Mammary epithelial cell (primary cell): ENCODE measurements at regions of chr16 and their contacts with region 1.

Region 1: GRCh38 chr16:23149349-23149996 is at the start of gene USP31:
- DNase-seq: peak; percentile 98
- H3K4me3 ChIP-seq: peak within 1 kb of the TSS; percentile 66 to 90 (median 73)
- H3K27ac ChIP-seq: peak within 1 kb of the TSS; percentile 99
- H3K4me1 ChIP-seq: peaks cover 36% of the 10 kb centered on the region
- H3K27me3 ChIP-seq: no peaks in the 10 kb centered on the region
- CTCF ChIP-seq: no peak
- total RNA-seq, gene USP31: 30.5 to 36.2 TPM

Region 2: GRCh38 chr16:23072084-23072599 is 77.3 kb before region 1 on chr16:
- CTCF ChIA-PET with region 1: no interaction called
- dilution Hi-C with region 1: no loop called
- in situ Hi-C with region 1: no loop called
- intact Hi-C with region 1: loop called (anchors 1 kb)
- DNase-seq: peak; percentile 82
- H3K4me3 ChIP-seq: no peak overlapping the region
- H3K27ac ChIP-seq: peak overlapping the region; percentile 93
- H3K4me1 ChIP-seq: peaks cover 36% of the 10 kb centered on the region
- H3K27me3 ChIP-seq: no peaks in the 10 kb centered on the region
- CTCF ChIP-seq: no peak

Region 3: DNA sequence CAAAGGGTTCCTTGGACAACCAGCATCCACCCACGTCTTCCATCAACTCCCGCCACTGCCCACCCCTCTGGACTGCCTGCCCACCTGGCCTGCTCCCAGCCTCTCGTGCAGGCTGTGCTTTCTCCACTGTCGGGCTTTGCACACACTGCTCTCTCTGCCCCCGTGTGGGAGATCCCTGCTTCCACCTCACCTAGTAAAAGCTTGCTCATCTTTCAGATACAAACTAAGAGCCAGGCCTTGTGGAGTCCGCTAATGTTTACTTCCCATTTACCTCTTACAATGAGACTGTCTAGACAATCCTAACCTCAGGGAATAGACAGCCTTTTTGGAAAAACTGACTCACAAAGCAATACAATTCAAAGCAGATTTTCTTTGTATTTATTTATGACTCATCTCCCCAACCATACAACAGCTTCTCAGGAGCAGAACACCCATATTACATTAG is 67.8 kb before region 1 on chr16:
- CTCF ChIA-PET with region 1: no interaction called
- dilution Hi-C with region 1: no loop called
- in situ Hi-C with region 1: no loop called
- intact Hi-C with region 1: loop called (anchors 2 kb)
- DNase-seq: peak; percentile 81
- H3K4me3 ChIP-seq: no peak overlapping the region
- H3K27ac ChIP-seq: peak overlapping the region; percentile 69
- H3K4me1 ChIP-seq: peaks cover 39% of the 10 kb centered on the region
- H3K27me3 ChIP-seq: no peaks in the 10 kb centered on the region
- CTCF ChIP-seq: peak; percentile 20 to 41

Region 4: DNA sequence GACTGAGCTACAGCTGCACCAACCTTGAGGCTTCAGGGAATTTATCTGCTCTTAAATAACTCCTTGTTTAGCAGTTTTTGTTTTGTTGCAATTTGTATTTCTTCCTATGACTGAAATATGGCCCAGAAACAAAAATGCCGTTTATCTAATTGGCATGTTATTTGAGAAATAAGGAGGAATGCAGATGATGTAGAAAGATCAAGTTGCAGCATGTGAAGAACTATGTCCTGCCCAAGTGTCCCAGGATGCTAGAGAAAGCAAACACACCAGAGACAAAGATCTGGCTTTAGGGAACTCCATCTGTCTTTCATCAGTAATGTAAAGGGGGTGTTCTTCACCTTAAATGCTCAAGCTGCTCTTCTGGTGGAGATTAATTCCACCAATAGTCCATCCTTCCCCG is 29.9 kb before region 1 on chr16:
- CTCF ChIA-PET with region 1: no interaction called
- dilution Hi-C with region 1: no loop called
- in situ Hi-C with region 1: no loop called
- intact Hi-C with region 1: loop called (anchors 1 kb)
- DNase-seq: peak; percentile 70
- H3K4me3 ChIP-seq: no peak overlapping the region
- H3K27ac ChIP-seq: peak overlapping the region; percentile 68
- H3K4me1 ChIP-seq: peaks cover 47% of the 10 kb centered on the region
- H3K27me3 ChIP-seq: no peaks in the 10 kb centered on the region
- CTCF ChIP-seq: no peak

Region 5: DNA sequence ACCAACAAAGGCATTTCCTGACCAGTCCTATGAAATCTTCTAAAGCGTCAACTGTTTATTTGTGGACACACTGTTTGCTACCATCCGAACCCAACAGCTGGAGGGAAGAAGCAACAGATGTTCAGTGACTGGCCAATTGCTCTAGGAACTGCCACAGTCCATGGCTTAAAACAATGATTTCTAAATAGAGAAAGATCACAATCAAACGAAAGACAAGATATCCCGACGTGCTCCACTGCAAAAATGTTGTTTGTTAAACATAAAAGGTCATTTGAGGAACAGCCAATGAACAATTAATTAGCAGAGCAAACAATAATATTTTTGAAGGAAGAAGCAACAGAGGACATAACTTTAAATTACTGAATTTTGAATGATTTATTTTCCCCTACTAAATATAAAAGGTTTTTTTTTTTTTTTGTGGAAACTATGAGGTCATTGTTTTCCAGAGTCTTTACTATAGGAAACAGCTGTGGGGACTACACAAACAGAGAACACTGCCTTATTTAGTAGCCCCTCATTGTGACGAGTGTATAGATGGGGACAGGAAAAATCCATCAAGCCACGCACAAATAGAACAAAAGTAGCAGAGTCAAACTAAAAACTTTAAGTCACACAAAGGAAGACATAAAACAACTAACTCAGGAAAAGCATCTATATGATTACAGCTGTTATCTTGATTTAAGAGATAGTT is 17.4 kb before region 1 on chr16:
- CTCF ChIA-PET with region 1: interaction called, 23 read pairs
- dilution Hi-C with region 1: no loop called
- in situ Hi-C with region 1: no loop called
- intact Hi-C with region 1: no loop called
- DNase-seq: no peak
- H3K4me3 ChIP-seq: no peak overlapping the region
- H3K27ac ChIP-seq: no peak overlapping the region
- H3K4me1 ChIP-seq: peaks cover 13% of the 10 kb centered on the region
- H3K27me3 ChIP-seq: no peaks in the 10 kb centered on the region
- CTCF ChIP-seq: no peak

Region 6: GRCh38 chr16:23491490-23492391 is 342.3 kb after region 1 on chr16:
- CTCF ChIA-PET with region 1: interaction called, 18 read pairs
- dilution Hi-C with region 1: no loop called
- in situ Hi-C with region 1: no loop called
- intact Hi-C with region 1: no loop called
- DNase-seq: peak; percentile 68
- H3K4me3 ChIP-seq: peak overlapping the region in 1 of 3 experiments; percentile 2
- H3K27ac ChIP-seq: peak overlapping the region; percentile 73
- H3K4me1 ChIP-seq: peaks cover 43% of the 10 kb centered on the region
- H3K27me3 ChIP-seq: no peaks in the 10 kb centered on the region
- CTCF ChIP-seq: no peak